ENCODE measurements at regions of chr22 and their contacts with region 1.

Region 1: DNA sequence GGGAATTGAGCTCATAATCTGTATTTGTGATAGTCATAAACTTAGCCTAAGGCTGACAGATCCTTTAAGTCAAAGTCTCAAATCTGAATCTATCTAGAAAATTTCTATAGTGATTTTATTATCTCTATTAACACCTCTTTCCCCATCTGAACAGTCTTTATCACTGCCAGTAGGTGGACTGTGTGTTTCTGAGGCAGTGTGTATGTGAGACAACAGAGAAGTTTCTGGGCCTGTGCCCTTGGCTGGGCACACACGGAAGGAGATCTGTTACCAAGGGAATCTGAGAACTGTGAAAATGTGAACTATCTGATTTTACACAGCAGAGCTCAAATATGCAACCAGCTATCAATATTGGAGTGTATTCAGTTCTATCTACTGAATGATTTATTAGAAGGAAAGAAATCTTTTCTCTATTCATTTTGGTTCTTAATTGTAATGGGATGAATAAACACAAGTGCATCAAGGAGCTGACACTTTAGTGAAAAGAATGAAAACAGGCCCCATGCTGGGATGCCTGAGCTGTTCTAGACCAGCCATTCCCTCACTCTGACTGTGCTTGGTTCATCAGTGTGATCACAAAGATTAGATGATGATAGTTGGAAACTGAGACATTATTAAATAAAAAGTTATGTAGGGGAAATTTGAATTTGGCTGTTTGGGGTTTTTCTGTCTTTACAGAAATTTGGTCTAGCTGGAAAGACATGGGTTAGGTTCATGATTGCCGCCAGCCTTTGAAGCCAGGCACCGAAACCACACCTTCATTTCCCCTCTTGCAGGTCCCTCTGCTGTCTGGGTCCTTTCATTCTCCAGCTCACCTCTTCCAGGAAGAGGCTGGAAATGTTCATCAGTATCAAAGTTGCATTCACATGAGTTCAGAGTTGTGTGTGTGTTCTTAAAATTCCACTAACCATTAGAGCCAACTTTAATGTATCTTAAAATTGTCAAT is 68.1 kb downstream of the LIF start:
- DNase-seq: peak; percentile 73
- H3K4me3 Mint-ChIP-seq: no peak overlapping the region
- H3K27ac Mint-ChIP-seq: peak overlapping the region; percentile 94
- H3K4me1 Mint-ChIP-seq: peaks cover 69% of the 10 kb centered on the region
- H3K27me3 Mint-ChIP-seq: no peaks in the 10 kb centered on the region

Region 2: GRCh38 chr22:29972121-29972520 is 206.3 kb before region 1 on chr22:
- CTCF ChIA-PET with region 1: no interaction called
- POLR2A ChIA-PET with region 1: no interaction called
- intact Hi-C with region 1: no loop called
- DNase-seq: no peak
- H3K4me3 Mint-ChIP-seq: no peak overlapping the region
- H3K27ac Mint-ChIP-seq: no peak overlapping the region
- H3K4me1 Mint-ChIP-seq: no peaks in the 10 kb centered on the region
- H3K27me3 Mint-ChIP-seq: no peaks in the 10 kb centered on the region

Region 3: DNA sequence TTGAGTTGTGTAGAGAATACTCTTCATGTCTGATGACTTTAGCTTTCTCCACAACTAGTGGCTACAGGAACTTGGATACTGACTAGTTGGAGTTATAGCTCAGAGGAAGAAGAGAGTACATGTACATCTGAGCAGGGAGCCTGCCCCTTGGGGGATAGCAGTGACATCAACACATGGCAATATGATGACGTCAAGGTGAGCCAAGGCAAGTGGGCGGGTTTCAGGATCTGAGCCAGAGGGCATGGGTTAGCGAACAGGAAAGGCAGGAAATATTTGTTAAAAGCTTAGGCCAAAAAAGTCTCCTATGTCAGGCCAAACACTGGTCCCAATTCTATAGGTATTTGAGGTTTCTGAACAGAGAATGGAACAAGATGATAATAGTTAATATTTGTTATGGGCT is 140.2 kb before region 1 on chr22:
- CTCF ChIA-PET with region 1: no interaction called
- POLR2A ChIA-PET with region 1: no interaction called
- intact Hi-C with region 1: no loop called
- DNase-seq: no peak
- H3K4me3 Mint-ChIP-seq: no peak overlapping the region
- H3K27ac Mint-ChIP-seq: no peak overlapping the region
- H3K4me1 Mint-ChIP-seq: peaks cover 7% of the 10 kb centered on the region
- H3K27me3 Mint-ChIP-seq: no peaks in the 10 kb centered on the region

Region 4: GRCh38 chr22:30129636-30130035 is 48.8 kb before region 1 on chr22:
- CTCF ChIA-PET with region 1: no interaction called
- POLR2A ChIA-PET with region 1: no interaction called
- intact Hi-C with region 1: no loop called
- DNase-seq: no peak
- H3K4me3 Mint-ChIP-seq: no peak overlapping the region
- H3K27ac Mint-ChIP-seq: no peak overlapping the region
- H3K4me1 Mint-ChIP-seq: peaks cover 12% of the 10 kb centered on the region
- H3K27me3 Mint-ChIP-seq: no peaks in the 10 kb centered on the region

Region 5: DNA sequence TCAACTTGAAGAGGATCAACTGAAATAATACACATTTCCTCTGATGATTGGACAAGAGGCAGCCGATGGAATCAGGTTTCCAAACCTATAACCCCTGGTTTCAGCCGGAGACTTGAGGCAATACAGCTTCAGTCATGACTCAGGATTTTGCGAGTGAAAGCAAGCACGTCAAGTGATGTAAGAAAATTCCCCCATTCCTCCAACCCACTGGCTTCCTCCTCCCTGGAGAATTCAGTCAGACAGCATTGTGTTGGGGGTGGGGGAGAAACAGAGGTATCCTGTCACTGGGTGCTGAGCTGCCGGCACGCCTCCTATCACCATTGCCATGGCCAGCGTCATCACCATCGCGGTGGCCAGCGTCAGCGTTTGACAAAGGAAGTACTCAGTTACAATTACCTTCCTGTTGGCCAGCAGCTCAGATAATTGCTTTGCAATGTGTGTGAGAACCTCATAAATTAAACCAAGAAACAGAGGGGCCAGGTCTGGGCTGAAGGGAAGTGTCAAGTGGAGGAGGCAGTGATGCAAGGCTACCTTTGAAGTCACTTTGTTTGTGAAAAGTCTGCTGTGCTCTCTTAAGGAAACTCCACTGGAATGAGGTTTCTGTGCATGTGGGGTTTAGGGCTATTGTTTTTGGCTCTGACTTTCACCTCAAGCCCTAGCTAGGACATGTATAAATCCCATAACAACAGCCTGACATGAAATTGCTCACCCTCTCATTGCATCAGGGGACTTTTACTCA is 17.9 kb after region 1 on chr22:
- CTCF ChIA-PET with region 1: interaction called, 5 read pairs
- POLR2A ChIA-PET with region 1: interaction called, 15 read pairs
- intact Hi-C with region 1: no loop called
- DNase-seq: peak; percentile 84
- H3K4me3 Mint-ChIP-seq: peak overlapping the region; percentile 56
- H3K27ac Mint-ChIP-seq: peak overlapping the region; percentile 97
- H3K4me1 Mint-ChIP-seq: peaks cover 70% of the 10 kb centered on the region
- H3K27me3 Mint-ChIP-seq: no peaks in the 10 kb centered on the region

Measured in activated CD4-positive, alpha-beta memory T cell treated with anti-CD3 and anti-CD28 coated beads for 36 hours (primary cell).